CD14-positive monocyte (primary cell): ENCODE measurements at regions of chr21 and their contacts with region 1.

Region 1: GRCh38 chr21:32562426-32562825 is 22.9 kb downstream of the TCP10L start:
- DNase-seq: no peak
- H3K4me3 ChIP-seq: no peak overlapping the region
- H3K4me3 Mint-ChIP-seq: no peak overlapping the region
- H3K27ac ChIP-seq: no peak overlapping the region
- H3K27ac Mint-ChIP-seq: no peak overlapping the region
- H3K4me1 ChIP-seq: no peaks in the 10 kb centered on the region
- H3K4me1 Mint-ChIP-seq: no peaks in the 10 kb centered on the region
- H3K27me3 ChIP-seq: no peaks in the 10 kb centered on the region
- H3K27me3 Mint-ChIP-seq: peaks cover 0 to 2% (median 2%) of the 10 kb centered on the region in 3 donors
- CTCF ChIP-seq: no peak

Region 2: DNA sequence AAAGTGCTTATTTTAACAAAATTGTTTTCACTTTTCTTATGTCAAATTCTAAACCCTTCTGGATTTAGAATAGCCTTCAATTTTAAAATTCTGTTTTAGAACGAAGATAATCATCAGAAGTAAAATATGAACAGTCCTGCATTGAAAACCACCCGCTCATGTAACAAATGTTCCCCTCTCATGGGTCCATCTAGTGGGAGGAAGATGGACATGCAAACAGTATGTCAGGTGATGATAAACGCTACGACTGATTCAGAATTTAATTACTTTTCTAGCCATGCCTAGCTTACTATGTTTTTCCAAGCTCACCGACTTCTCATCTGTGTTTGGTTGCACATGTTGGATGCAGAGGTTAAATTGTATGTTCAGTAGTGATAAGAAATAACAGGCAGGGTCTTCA is 879.4 kb before region 1 on chr21:
- intact Hi-C with region 1: no loop called
- DNase-seq: no peak
- H3K4me3 ChIP-seq: no peak overlapping the region
- H3K4me3 Mint-ChIP-seq: no peak overlapping the region
- H3K27ac ChIP-seq: no peak overlapping the region
- H3K27ac Mint-ChIP-seq: no peak overlapping the region
- H3K4me1 ChIP-seq: no peaks in the 10 kb centered on the region
- H3K4me1 Mint-ChIP-seq: no peaks in the 10 kb centered on the region
- H3K27me3 ChIP-seq: no peaks in the 10 kb centered on the region
- H3K27me3 Mint-ChIP-seq: peaks cover 0 to 2% (median 0%) of the 10 kb centered on the region in 3 donors
- CTCF ChIP-seq: no peak

Region 3: GRCh38 chr21:32412162-32413014 is 150.0 kb before region 1 on chr21 and contains the start of gene EVA1C:
- intact Hi-C with region 1: loop called in 1 of 2 experiments (anchors 5 kb)
- DNase-seq: peak; percentile 20 to 30 (median 23)
- H3K4me3 ChIP-seq: peak within 1 kb of the TSS; percentile 79 to 95 (median 83)
- H3K4me3 Mint-ChIP-seq: peak within 1 kb of the TSS; percentile 97 to 98
- H3K27ac ChIP-seq: peak within 1 kb of the TSS; percentile 46 to 70
- H3K27ac Mint-ChIP-seq: peak within 1 kb of the TSS; percentile 72 to 92 (median 79)
- H3K4me1 ChIP-seq: peaks cover 14 to 19% of the 10 kb centered on the region in 2 donors
- H3K4me1 Mint-ChIP-seq: peaks cover 17% of the 10 kb centered on the region
- H3K27me3 ChIP-seq: peaks cover 0 to 8% of the 10 kb centered on the region in 2 donors
- H3K27me3 Mint-ChIP-seq: peaks cover 15 to 23% (median 16%) of the 10 kb centered on the region in 3 donors
- CTCF ChIP-seq: peak; percentile 9
- polyA plus RNA-seq, gene EVA1C: 0.37 to 0.73 (median 0.63) TPM

Region 4: DNA sequence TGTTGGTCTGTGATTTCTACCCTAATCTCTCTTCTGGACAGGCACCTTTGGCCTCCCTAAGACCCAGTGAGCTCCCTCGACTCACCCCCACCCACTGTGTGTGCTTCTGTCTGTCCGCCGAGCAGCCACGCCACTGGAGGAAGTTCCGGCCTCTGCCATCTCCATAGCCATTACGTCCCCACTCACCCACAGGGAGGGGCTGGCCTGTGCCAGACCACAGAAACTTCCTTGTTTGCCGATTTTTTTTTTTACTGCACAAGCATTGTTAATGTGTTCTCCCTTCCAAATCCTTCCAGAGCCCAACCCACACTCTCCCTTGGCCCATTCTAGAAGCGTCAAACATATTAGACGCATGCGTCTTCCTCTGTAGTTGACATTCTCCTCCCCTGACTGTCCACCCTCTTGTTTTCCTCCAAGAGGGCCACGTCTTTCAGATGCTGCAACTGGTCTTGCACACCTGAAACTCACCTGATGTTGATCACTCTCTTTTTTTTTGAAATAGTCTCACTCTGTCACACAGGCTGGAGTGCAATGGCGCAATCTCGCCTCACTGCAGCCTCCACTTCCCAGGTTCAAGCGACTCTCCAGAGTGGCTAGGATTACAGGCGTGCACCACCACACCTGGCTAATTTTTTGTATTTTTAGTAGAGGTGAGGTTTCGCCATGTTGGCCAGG is 77.6 kb before region 1 on chr21:
- intact Hi-C with region 1: no loop called
- DNase-seq: peak; percentile 13 to 33 (median 26)
- H3K4me3 ChIP-seq: peak overlapping the region in 1 of 3 experiments; percentile 44
- H3K4me3 Mint-ChIP-seq: peak overlapping the region; percentile 70 to 92
- H3K27ac ChIP-seq: peak overlapping the region in 1 of 2 donors; percentile 6
- H3K27ac Mint-ChIP-seq: peak overlapping the region; percentile 34 to 92 (median 51)
- H3K4me1 ChIP-seq: peaks cover 7 to 9% of the 10 kb centered on the region in 2 donors
- H3K4me1 Mint-ChIP-seq: peaks cover 9% of the 10 kb centered on the region
- H3K27me3 ChIP-seq: no peaks in the 10 kb centered on the region
- H3K27me3 Mint-ChIP-seq: peaks cover 0 to 6% (median 1%) of the 10 kb centered on the region in 3 donors
- CTCF ChIP-seq: no peak

Region 5: DNA sequence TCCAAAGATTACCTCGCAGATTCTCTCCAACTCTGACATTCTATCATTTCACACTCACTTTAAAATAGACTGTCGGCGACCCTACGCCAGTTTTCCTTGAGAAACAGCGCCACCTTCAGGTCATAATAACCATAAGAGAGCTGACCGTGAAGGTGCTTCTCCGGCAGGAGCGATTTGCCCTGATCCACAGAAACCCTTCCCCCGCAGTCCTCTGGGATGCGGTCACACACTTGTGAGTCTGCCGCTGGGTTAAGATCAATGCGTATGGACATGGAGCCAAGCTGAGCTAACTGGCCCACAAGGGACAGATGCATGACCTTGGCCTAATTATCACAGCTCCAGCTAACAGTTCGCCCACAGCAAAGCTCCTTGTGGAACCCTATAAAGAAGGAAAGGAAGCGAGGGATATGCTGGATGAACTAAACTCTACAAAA is 634.5 kb after region 1 on chr21:
- intact Hi-C with region 1: no loop called
- DNase-seq: peak in 2 of 3 donors; percentile 62 to 67
- H3K4me3 ChIP-seq: no peak overlapping the region
- H3K4me3 Mint-ChIP-seq: no peak overlapping the region
- H3K27ac ChIP-seq: peak overlapping the region in 1 of 2 donors; percentile 91
- H3K27ac Mint-ChIP-seq: peak overlapping the region in 4 of 7 donors; percentile 33 to 98 (median 56)
- H3K4me1 ChIP-seq: peaks cover 40 to 46% of the 10 kb centered on the region in 2 donors
- H3K4me1 Mint-ChIP-seq: peaks cover 49% of the 10 kb centered on the region
- H3K27me3 ChIP-seq: no peaks in the 10 kb centered on the region
- H3K27me3 Mint-ChIP-seq: peaks cover 0 to 8% (median 8%) of the 10 kb centered on the region in 3 donors
- CTCF ChIP-seq: peak; percentile 91